ENCODE measurements at regions of chr9 and their contacts with region 1.

Region 1: GRCh38 chr9:91101611-91102168 is 260.0 kb downstream of the AUH start:
- DNase-seq: no peak
- H3K4me3 ChIP-seq: no peak overlapping the region
- H3K27ac ChIP-seq: no peak overlapping the region
- H3K4me1 ChIP-seq: peaks cover 18% of the 10 kb centered on the region
- H3K27me3 ChIP-seq: no peaks in the 10 kb centered on the region
- CTCF ChIP-seq: no peak

Region 2: DNA sequence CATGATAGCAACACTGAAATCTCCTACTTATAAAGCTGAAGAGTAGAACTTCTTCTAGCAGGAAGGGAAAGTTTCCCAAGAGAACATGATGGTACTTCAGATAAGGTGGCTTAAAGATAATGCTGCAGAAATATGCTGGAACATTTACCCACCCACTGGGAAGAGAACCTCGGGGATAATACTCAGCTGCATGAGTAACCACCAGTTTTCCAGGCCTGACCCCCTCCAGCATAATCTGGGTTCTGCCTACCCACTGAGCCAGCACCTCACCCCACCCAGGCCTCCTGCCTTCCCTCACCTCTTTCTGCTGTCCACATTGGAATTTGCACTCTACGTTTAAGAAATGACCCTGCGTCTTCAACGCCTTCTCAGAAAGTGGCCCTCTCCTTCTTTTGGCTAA is 535.3 kb before region 1 on chr9:
- CTCF ChIA-PET with region 1: interaction called, 11 read pairs
- POLR2A ChIA-PET with region 1: no interaction called
- intact Hi-C with region 1: no loop called
- DNase-seq: no peak
- H3K4me3 ChIP-seq: no peak overlapping the region
- H3K27ac ChIP-seq: no peak overlapping the region
- H3K4me1 ChIP-seq: no peaks in the 10 kb centered on the region
- H3K27me3 ChIP-seq: no peaks in the 10 kb centered on the region
- CTCF ChIP-seq: no peak

Region 3: GRCh38 chr9:90808890-90809685 is 292.6 kb before region 1 on chr9:
- CTCF ChIA-PET with region 1: no interaction called
- POLR2A ChIA-PET with region 1: no interaction called
- intact Hi-C with region 1: no loop called
- DNase-seq: no peak
- H3K4me3 ChIP-seq: no peak overlapping the region
- H3K27ac ChIP-seq: no peak overlapping the region
- H3K4me1 ChIP-seq: peaks cover 10% of the 10 kb centered on the region; the same call in 1 of the 2 replicates
- H3K27me3 ChIP-seq: no peaks in the 10 kb centered on the region
- CTCF ChIP-seq: no peak

Region 4: GRCh38 chr9:91029650-91030361 is 71.9 kb before region 1 on chr9:
- CTCF ChIA-PET with region 1: no interaction called
- POLR2A ChIA-PET with region 1: no interaction called
- intact Hi-C with region 1: no loop called
- DNase-seq: no peak
- H3K4me3 ChIP-seq: no peak overlapping the region
- H3K27ac ChIP-seq: no peak overlapping the region
- H3K4me1 ChIP-seq: peaks cover 5% of the 10 kb centered on the region
- H3K27me3 ChIP-seq: no peaks in the 10 kb centered on the region
- CTCF ChIP-seq: no peak

Region 5: DNA sequence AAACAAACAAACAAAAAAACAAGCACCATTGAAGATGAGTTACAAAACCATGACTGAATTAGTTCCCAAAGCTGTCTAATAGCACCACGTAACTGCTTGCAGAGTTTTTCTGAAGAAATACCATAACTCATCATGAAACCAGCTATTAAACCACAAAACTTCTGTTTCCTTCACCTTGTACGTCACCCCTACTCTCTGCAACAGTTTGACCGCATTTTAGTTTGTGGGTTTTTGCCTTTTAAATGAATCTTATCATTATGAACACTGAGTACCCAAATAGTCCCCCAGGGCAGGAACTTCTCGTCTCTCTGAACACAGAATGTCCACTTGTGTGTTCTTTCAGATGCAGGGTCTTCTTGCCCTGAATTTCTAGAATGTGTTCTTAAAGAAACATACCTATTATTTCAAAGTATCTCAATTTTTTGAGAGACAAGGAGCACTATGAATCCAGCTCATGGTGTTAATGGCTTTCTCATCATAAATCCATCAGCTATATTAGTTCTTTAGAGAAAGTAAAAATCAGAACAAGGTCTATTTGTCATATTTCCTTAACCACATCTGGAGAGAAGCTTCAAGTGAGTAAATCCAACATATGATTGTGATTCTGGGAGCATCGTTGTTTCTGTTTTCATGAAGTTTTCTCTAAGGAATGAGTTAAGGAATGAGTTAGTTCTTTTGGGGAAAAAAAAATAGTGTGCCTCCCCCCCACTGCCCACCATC is 49.5 kb after region 1 on chr9:
- CTCF ChIA-PET with region 1: no interaction called
- POLR2A ChIA-PET with region 1: no interaction called
- intact Hi-C with region 1: no loop called
- DNase-seq: no peak
- H3K4me3 ChIP-seq: no peak overlapping the region
- H3K27ac ChIP-seq: no peak overlapping the region
- H3K4me1 ChIP-seq: no peaks in the 10 kb centered on the region
- H3K27me3 ChIP-seq: no peaks in the 10 kb centered on the region
- CTCF ChIP-seq: no peak

Region 6: DNA sequence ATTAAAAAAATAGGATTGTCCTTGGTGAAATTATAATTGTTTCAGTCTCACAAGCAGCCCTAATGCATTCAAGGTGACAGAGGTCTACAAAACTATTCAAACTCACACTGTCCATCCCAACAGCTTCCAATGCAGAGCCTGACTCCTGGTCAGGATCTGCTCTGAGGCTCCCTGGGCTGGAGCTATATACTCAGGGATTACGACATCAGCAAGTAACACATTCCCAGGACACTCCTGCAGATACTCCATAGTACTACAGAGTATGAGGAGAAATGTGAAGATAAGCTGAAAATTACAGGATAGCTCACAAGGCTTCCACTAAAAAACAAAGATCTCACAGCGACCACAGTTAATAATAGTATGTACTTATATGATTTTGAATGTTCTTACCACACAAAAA is 129.9 kb after region 1 on chr9:
- CTCF ChIA-PET with region 1: no interaction called
- POLR2A ChIA-PET with region 1: no interaction called
- intact Hi-C with region 1: no loop called
- DNase-seq: no peak
- H3K4me3 ChIP-seq: no peak overlapping the region
- H3K27ac ChIP-seq: no peak overlapping the region
- H3K4me1 ChIP-seq: no peaks in the 10 kb centered on the region
- H3K27me3 ChIP-seq: no peaks in the 10 kb centered on the region
- CTCF ChIP-seq: no peak